MCF 10A (cell line): ENCODE measurements at regions of chr4 and their contacts with region 1.

Region 1: DNA sequence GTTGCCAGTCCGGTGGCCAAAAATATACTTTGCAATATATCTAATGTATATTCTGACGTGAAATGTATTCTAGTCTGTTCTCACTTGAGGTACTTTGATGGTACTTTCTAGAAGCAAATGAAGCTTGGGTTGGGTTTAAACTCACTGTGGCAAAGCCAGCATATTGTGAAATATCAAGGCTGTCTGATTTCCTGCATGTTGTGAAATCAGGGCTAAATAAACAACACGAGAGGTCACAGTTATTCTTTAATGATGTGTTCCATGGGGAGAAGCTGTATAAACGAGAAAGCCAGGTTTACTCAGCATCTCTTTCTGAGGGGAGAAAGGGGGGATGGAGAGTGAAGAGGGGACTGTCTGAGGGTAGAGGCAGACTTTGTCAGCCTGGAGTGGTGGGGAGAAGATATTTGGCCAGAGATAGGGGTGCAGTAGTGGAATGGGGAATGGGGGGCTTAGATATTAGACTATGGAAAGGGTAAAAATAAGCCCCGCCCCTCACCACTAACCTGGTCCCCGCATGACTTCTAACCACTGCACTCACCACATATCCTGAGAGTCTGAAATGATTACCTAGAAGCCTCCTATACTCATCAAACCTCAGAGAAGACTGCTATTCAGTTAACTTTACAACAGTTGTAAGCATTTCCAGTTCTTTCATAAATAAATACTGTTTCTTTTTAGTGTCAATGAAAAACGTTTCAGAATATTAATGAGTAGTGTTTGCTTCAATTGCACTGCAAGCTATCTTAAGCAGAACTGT is 5.9 kb upstream of the SCARB2 start:
- DNase-seq: peak; percentile 85
- H3K4me3 Mint-ChIP-seq: no peak overlapping the region
- H3K27ac Mint-ChIP-seq: peak overlapping the region; percentile 68
- H3K4me1 Mint-ChIP-seq: peaks cover 28% of the 10 kb centered on the region
- H3K27me3 Mint-ChIP-seq: no peaks in the 10 kb centered on the region
- CTCF ChIP-seq: no peak

Region 2: DNA sequence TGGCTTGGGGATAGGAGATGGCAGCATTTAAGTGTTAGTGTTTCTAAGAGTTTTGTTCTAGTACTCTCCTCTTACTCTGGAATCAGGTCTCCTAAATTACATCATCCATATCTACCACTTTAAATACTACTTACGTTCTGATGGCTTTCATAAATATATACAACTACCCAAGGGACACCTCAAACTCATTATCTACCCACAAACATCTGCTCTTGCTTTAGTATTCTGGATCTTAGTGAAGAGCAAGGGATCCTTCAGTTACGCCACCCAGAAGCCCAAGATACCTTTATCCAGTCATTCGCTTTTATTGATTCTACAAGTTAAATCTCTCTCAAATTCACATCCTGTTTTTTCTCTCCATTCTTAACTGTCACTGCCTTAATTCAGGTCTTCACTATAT is 78.2 kb before region 1 on chr4:
- CTCF ChIA-PET with region 1: no interaction called
- POLR2A ChIA-PET with region 1: no interaction called
- intact Hi-C with region 1: no loop called
- DNase-seq: no peak
- H3K4me3 Mint-ChIP-seq: no peak overlapping the region
- H3K27ac Mint-ChIP-seq: no peak overlapping the region
- H3K4me1 Mint-ChIP-seq: peaks cover 17% of the 10 kb centered on the region
- H3K27me3 Mint-ChIP-seq: no peaks in the 10 kb centered on the region
- CTCF ChIP-seq: no peak

Region 3: DNA sequence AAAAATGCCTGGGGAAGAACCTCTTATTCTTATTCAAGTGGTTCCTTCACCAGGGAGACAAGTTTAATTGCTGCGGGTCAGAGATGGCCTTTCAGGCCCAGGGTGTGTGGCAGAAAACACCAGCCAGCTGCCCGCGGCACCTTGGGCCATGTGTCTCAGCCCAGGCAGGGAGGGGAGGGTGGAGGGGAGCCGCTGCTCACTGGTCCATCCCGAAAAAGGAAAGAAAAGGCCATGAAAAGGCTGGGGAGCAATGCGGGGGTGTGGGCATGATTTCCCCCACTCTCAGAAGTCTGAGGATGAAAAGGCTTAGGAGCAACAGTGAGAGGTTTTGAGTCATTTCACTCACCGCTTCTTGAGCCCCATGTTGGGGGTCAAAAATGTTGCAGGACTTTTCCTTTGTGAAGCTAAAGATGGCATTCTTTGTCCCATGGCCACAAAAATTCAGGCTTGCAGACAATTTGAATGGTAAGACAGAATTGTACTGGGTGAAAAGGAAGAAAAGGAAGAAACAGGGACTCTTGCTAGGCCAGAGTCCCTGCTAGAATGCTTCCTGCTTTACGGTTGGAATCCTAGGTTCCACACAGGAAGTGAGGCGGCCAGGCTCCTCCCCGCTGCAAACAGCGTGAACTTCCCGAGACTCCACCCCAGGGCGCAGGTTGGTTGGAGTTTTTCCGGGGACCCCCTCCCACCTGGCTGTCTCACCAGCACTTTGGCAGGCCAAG is 14.6 kb after region 1 on chr4:
- CTCF ChIA-PET with region 1: interaction called, 5 read pairs
- POLR2A ChIA-PET with region 1: interaction called, 69 read pairs
- intact Hi-C with region 1: no loop called
- DNase-seq: no peak
- H3K4me3 Mint-ChIP-seq: no peak overlapping the region
- H3K27ac Mint-ChIP-seq: peak overlapping the region; percentile 83
- H3K4me1 Mint-ChIP-seq: peaks cover 46% of the 10 kb centered on the region
- H3K27me3 Mint-ChIP-seq: no peaks in the 10 kb centered on the region
- CTCF ChIP-seq: no peak

Region 4: GRCh38 chr4:76499461-76499860 is 280.0 kb after region 1 on chr4:
- CTCF ChIA-PET with region 1: no interaction called
- POLR2A ChIA-PET with region 1: no interaction called
- intact Hi-C with region 1: no loop called
- DNase-seq: no peak
- H3K4me3 Mint-ChIP-seq: no peak overlapping the region
- H3K27ac Mint-ChIP-seq: no peak overlapping the region
- H3K4me1 Mint-ChIP-seq: no peaks in the 10 kb centered on the region
- H3K27me3 Mint-ChIP-seq: no peaks in the 10 kb centered on the region
- CTCF ChIP-seq: no peak